Gastrocnemius medialis (tissue), 4 donors: ENCODE measurements at regions of chr16 and their contacts with region 1.

Region 1: DNA sequence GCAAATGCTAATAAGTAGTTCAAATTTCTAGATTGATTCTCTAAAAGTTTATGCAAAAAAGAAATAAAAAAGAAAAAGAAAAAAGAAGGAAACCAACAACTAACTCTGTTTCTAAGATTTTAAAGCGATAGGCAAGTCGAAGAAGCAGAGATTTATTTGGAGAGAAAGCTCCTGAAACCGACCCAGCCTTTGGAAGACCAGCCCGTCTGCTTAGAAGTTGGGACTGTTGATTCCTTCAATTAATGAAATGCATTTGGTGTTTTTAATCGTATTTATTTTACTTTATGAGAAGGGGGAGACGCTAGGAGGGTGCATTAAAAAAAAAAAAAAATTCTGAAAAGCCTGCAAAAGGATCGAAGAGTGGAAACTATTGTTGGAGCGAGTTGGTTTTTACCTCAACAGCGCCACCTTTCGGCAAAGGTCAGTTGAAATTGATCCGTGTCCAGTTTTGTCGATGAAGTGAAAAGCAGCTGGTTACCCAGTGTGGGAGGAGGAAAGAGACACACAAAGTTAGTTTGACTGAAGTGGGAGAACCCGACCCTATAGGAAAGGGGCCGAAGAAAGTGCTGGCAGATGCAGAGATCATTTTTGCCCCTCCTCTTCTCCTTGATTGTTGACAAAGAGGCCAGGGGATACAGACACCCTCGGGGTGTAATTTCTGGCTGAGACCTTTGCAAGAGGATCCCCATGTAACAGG is 1.5 kb upstream of the MAF start:
- DNase-seq: peak; percentile 68 to 73
- ATAC-seq: peak; percentile 22 to 23
- H3K4me3 ChIP-seq: peak overlapping the region; percentile 74 to 89 (median 86)
- H3K27ac ChIP-seq: peak overlapping the region; percentile 92 to 98 (median 98)
- H3K4me1 ChIP-seq: peaks cover 18 to 19% of the 10 kb centered on the region in 2 donors
- H3K27me3 ChIP-seq: no peaks in the 10 kb centered on the region
- CTCF ChIP-seq: peak; percentile 69 to 81 (median 79)
- POLR2A ChIP-seq: no peak

Region 2: DNA sequence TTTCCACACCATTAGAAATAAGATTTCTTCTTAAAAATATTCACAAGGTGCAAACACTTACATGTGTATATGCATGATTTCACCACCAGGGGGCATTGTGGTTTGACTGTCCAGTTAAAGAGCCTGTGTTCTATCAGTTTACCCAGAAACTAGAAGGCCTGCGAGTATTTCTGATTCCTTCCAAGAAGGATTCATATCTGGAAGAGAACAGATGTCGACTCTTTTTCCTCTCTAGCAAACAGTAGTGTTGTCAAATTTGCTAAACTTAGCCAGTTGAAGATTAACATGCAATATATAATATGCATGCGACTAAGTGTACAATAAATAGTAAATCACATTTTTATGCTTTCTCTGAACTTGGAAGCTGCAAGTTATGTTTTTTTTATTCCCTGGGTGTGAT is 1098.5 kb before region 1 on chr16:
- in situ Hi-C with region 1: loop called (anchors 10 to 25 kb)
- intact Hi-C with region 1: loop called (anchors 2 kb)
- DNase-seq: peak; percentile 26 to 33
- ATAC-seq: no peak
- H3K4me3 ChIP-seq: no peak overlapping the region
- H3K27ac ChIP-seq: peak overlapping the region in 1 of 4 donors; percentile 72
- H3K4me1 ChIP-seq: peaks cover 21 to 23% of the 10 kb centered on the region in 2 donors
- H3K27me3 ChIP-seq: no peaks in the 10 kb centered on the region
- CTCF ChIP-seq: peak; percentile 83 to 88 (median 87)
- POLR2A ChIP-seq: no peak

Region 3: GRCh38 chr16:78816499-78817195 is 785.4 kb before region 1 on chr16:
- in situ Hi-C with region 1: no loop called
- intact Hi-C with region 1: loop called (anchors 5 kb)
- DNase-seq: peak; percentile 60 to 73
- ATAC-seq: peak; percentile 86 to 91
- H3K4me3 ChIP-seq: no peak overlapping the region
- H3K27ac ChIP-seq: peak overlapping the region; percentile 41 to 66 (median 52)
- H3K4me1 ChIP-seq: peaks cover 34 to 35% of the 10 kb centered on the region in 2 donors
- H3K27me3 ChIP-seq: no peaks in the 10 kb centered on the region
- CTCF ChIP-seq: no peak
- POLR2A ChIP-seq: no peak

Region 4: GRCh38 chr16:79286646-79287423 is 315.2 kb before region 1 on chr16:
- in situ Hi-C with region 1: no loop called
- intact Hi-C with region 1: loop called (anchors 10 kb)
- DNase-seq: peak; percentile 16 to 42
- ATAC-seq: peak; percentile 55 to 61
- H3K4me3 ChIP-seq: peak overlapping the region; percentile 20 to 48 (median 36)
- H3K27ac ChIP-seq: no peak overlapping the region
- H3K4me1 ChIP-seq: peaks cover 27 to 31% of the 10 kb centered on the region in 2 donors
- H3K27me3 ChIP-seq: no peaks in the 10 kb centered on the region
- CTCF ChIP-seq: no peak
- POLR2A ChIP-seq: no peak

Region 5: GRCh38 chr16:79437764-79438751 is 164.0 kb before region 1 on chr16:
- in situ Hi-C with region 1: no loop called
- intact Hi-C with region 1: loop called (anchors 2 kb)
- DNase-seq: peak; percentile 30 to 75
- ATAC-seq: peak; percentile 87 to 96
- H3K4me3 ChIP-seq: peak overlapping the region; percentile 26 to 43 (median 36)
- H3K27ac ChIP-seq: peak overlapping the region; percentile 76 to 87 (median 82)
- H3K4me1 ChIP-seq: peaks cover 11 to 25% of the 10 kb centered on the region in 2 donors
- H3K27me3 ChIP-seq: no peaks in the 10 kb centered on the region
- CTCF ChIP-seq: no peak
- POLR2A ChIP-seq: no peak

Region 6: DNA sequence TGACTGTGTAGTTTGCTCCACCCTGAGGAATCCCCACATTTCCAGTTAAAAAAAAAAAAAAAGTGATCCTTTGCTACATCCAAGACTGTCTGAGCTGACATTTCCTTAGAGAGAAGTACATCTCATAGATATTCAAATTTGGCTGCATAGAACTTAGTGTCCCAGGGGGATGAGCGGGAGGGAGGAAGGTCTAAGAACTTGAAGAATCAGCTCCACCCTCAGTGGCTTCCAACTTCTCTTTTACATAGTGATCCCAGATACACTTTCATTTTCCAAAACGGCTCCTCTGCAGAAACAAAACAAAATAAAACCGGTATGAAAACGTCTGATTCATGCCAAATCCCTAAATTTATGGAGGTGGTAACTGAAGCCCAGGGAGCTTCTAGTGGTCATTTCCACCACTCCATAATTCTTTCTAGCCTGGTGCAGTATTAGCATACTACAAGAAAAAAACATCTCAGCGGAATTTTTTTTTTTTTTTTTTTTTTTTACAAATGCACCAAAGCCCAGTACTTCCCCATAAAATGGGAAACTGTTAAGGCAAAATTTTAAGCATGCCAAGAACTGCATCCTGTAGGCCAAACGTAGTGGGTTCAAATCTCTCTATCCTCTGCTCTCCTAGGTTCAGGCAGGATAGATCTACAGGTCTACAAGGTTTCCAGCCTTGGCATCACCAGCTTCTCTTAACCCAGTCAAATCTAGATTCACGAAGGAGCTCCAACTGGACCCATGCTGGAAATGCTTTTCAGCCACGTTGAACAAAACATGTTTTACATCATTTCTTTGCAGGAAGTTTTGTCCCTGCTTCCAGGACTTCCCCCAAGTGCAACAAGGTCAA is 30.8 kb before region 1 on chr16:
- in situ Hi-C with region 1: no loop called
- intact Hi-C with region 1: no loop called
- DNase-seq: no peak
- ATAC-seq: peak; percentile 52 to 60
- H3K4me3 ChIP-seq: peak overlapping the region in 3 of 4 donors; percentile 26 to 38 (median 37)
- H3K27ac ChIP-seq: no peak overlapping the region
- H3K4me1 ChIP-seq: peaks cover 0 to 4% of the 10 kb centered on the region in 2 donors
- H3K27me3 ChIP-seq: no peaks in the 10 kb centered on the region
- CTCF ChIP-seq: no peak
- POLR2A ChIP-seq: no peak

Region 7: DNA sequence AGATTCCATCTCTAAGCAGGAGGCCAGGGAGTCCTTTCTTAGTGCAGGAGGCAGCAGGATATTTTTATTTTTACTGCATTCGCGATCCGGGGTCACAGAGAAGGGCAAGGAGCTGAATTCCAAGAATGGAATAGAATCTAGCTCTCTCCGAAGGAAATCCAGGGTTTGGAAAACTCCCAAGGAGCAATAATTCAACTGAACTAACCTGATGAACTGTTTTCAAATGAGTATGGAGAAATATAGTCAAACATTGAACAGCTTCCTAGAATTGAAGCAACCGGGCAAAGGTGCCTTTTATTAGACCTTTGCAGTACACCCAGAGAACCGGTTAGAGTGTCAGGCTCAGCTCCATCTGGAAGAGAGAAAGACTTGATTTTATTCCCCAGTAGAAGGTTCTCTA is 119.2 kb after region 1 on chr16:
- in situ Hi-C with region 1: no loop called
- intact Hi-C with region 1: no loop called
- DNase-seq: no peak
- ATAC-seq: no peak
- H3K4me3 ChIP-seq: no peak overlapping the region
- H3K27ac ChIP-seq: no peak overlapping the region
- H3K4me1 ChIP-seq: no peaks in the 10 kb centered on the region
- H3K27me3 ChIP-seq: no peaks in the 10 kb centered on the region
- CTCF ChIP-seq: no peak
- POLR2A ChIP-seq: no peak

Region 8: DNA sequence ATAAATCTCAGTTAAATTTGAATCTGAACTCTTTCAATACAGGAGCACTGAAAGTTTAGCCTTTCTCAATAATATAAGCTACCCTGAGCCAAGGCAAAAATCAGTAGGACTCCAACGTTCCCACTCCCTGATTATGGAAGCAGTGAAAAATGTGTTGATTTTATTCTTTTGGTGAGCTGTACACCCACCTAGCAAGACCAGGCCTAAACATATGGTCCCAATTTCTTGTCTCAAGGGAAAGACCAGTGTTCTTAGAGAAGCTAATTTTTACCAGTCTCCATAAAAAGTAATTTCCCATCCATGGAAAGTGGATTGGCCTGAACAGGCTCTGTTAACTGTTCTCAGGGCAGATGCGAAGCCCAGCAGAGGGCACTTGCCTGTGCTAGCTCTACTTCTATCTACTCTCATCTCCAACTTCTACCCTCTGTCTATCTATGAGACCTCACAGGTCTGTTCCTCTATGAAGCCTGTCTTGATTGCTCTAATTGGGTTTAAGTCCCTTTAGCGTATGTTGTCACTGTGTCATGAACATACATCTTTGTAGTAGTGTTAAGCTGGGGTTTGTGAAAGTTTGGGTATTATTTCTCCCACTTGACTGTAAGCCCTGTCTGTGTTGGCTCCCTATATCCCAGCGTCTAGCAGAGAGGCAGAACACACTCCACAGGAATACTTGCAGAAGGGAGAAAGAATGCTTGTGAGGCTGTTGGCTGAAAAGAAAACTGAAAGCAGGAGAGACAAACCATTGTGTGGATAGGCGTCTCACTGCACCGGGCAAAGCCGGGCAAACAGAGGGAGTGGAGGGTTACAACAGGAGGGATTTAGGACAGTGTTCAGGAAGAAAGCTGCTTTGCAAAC is 165.6 kb after region 1 on chr16:
- in situ Hi-C with region 1: no loop called
- intact Hi-C with region 1: loop called (anchors 5 kb)
- DNase-seq: no peak
- ATAC-seq: peak in 1 of 2 donors; percentile 24
- H3K4me3 ChIP-seq: peak overlapping the region; percentile 23 to 53 (median 34)
- H3K27ac ChIP-seq: peak overlapping the region; percentile 33 to 73 (median 58)
- H3K4me1 ChIP-seq: peaks cover 8 to 25% of the 10 kb centered on the region in 2 donors
- H3K27me3 ChIP-seq: no peaks in the 10 kb centered on the region
- CTCF ChIP-seq: no peak
- POLR2A ChIP-seq: no peak

Region 9: DNA sequence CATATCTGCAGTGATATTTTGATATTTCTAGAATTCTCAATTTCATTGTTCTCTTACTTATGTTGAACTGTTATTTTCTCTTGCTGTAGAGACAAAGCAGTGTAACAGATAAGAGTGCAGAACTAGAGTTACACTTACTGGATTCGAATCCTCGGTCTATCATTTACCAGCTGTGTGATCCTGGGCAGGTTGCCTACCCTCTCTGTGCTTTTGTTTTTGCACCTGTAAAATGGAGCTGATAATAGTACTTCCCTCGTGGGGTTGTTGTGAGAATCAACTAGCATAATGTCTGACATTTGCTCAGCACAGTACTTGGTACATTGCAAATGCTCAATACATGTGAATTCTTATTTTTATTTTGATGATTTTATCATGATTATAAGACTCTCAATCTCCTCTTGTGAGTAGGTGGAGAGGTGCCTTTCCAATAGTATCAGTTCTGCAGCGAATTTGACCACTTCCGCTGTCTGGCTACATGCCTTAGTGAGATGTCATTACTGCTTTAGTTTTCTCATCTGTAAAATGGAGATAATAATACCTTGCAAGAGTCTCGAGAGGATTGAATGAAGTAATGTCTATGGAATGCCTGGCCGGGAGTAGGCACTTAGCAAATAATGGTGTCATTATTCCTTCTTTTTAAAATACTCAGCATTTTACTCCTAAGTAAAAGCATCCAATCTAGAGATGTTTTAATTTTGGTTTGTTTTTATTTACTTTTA is 310.7 kb after region 1 on chr16:
- in situ Hi-C with region 1: no loop called
- intact Hi-C with region 1: no loop called
- DNase-seq: no peak
- ATAC-seq: no peak
- H3K4me3 ChIP-seq: no peak overlapping the region
- H3K27ac ChIP-seq: no peak overlapping the region
- H3K4me1 ChIP-seq: no peaks in the 10 kb centered on the region
- H3K27me3 ChIP-seq: no peaks in the 10 kb centered on the region
- CTCF ChIP-seq: no peak
- POLR2A ChIP-seq: no peak